Esophagus muscularis mucosa (tissue), 4 donors: ENCODE measurements at regions of chr16 and their contacts with region 1.

Region 1: GRCh38 chr16:88785106-88785924 is at the start of gene PIEZO1:
- DNase-seq: no peak
- H3K4me3 ChIP-seq: peak within 1 kb of the TSS; percentile 75 to 90 (median 86)
- H3K27ac ChIP-seq: peak within 1 kb of the TSS; percentile 87 to 99 (median 98)
- H3K4me1 ChIP-seq: peaks cover 38 to 58% (median 47%) of the 10 kb centered on the region in 4 donors
- H3K27me3 ChIP-seq: no peaks in the 10 kb centered on the region
- CTCF ChIP-seq: peak; percentile 93 to 98 (median 96)
- EP300 ChIP-seq: no peak
- POLR2A ChIP-seq: peak; percentile 33
- total RNA-seq, gene PIEZO1: 140 to 298 (median 182) TPM

Region 2: GRCh38 chr16:88743693-88744576 is 41.4 kb before region 1 on chr16:
- intact Hi-C with region 1: loop called (anchors 2 kb)
- DNase-seq: no peak
- H3K4me3 ChIP-seq: no peak overlapping the region
- H3K27ac ChIP-seq: peak overlapping the region in 3 of 4 donors; percentile 18 to 84 (median 53)
- H3K4me1 ChIP-seq: peaks cover 37 to 56% (median 53%) of the 10 kb centered on the region in 4 donors
- H3K27me3 ChIP-seq: no peaks in the 10 kb centered on the region
- CTCF ChIP-seq: peak in 2 of 3 experiments; percentile 88
- EP300 ChIP-seq: no peak
- POLR2A ChIP-seq: no peak